Activated naive CD4-positive, alpha-beta T cell treated with anti-CD3 and anti-CD28 coated beads for 36 hours (primary cell): ENCODE measurements at regions of chrX and their contacts with region 1.

Region 1: GRCh38 chrX:41333744-41334259 is at the start of gene DDX3X:
- DNase-seq: peak; percentile 85
- H3K4me3 Mint-ChIP-seq: peak within 1 kb of the TSS; percentile 92
- H3K27ac Mint-ChIP-seq: peak within 1 kb of the TSS; percentile 99
- H3K4me1 Mint-ChIP-seq: peaks cover 22% of the 10 kb centered on the region
- H3K27me3 Mint-ChIP-seq: no peaks in the 10 kb centered on the region
- total RNA-seq, gene DDX3X: 163 to 171 TPM

Region 2: GRCh38 chrX:40580537-40581335 is 753.1 kb before region 1 on chrX and contains the start of gene ATP6AP2:
- CTCF ChIA-PET with region 1: no interaction called
- intact Hi-C with region 1: loop called (anchors 2 kb)
- DNase-seq: peak; percentile 95
- H3K4me3 Mint-ChIP-seq: peak within 1 kb of the TSS; percentile 83
- H3K27ac Mint-ChIP-seq: peak within 1 kb of the TSS; percentile 85
- H3K4me1 Mint-ChIP-seq: peaks cover 26% of the 10 kb centered on the region
- H3K27me3 Mint-ChIP-seq: no peaks in the 10 kb centered on the region
- total RNA-seq, gene ATP6AP2: 47.4 to 53.9 TPM

Region 3: GRCh38 chrX:40877887-40878286 is 455.9 kb before region 1 on chrX:
- CTCF ChIA-PET with region 1: no interaction called
- intact Hi-C with region 1: no loop called
- DNase-seq: no peak
- H3K4me3 Mint-ChIP-seq: no peak overlapping the region
- H3K27ac Mint-ChIP-seq: no peak overlapping the region
- H3K4me1 Mint-ChIP-seq: peaks cover 4% of the 10 kb centered on the region
- H3K27me3 Mint-ChIP-seq: no peaks in the 10 kb centered on the region

Region 4: DNA sequence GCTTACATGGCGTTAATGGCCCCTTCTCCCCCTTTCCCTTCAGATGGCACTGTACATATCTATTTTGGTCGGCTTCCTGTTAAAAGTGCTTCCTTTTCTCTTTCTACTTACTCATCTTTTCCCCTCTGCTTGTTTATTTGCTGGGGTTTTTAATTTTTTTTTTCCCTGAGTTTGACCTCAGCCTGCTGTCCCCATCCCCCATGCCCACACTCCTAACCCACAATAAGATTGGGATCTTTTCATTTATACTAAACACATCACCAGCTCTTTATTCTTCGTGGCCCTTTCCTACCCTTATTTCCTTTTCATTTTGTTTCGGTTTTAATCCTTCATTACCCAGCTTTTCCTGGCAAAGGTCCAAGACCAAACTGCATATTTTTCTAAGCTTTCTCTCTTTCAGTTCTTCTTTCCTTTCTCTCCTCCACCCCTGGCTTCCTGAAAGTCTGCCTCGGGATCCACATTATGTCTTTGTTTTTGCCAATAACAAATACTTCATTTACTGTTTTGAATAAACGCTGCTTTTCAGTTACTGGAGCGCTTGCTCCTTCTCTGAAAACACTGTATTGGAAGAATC is 400.6 kb before region 1 on chrX:
- CTCF ChIA-PET with region 1: no interaction called
- intact Hi-C with region 1: loop called (anchors 5 kb)
- DNase-seq: peak; percentile 26
- H3K4me3 Mint-ChIP-seq: peak overlapping the region; percentile 48
- H3K27ac Mint-ChIP-seq: peak overlapping the region; percentile 87
- H3K4me1 Mint-ChIP-seq: peaks cover 22% of the 10 kb centered on the region
- H3K27me3 Mint-ChIP-seq: no peaks in the 10 kb centered on the region

Region 5: DNA sequence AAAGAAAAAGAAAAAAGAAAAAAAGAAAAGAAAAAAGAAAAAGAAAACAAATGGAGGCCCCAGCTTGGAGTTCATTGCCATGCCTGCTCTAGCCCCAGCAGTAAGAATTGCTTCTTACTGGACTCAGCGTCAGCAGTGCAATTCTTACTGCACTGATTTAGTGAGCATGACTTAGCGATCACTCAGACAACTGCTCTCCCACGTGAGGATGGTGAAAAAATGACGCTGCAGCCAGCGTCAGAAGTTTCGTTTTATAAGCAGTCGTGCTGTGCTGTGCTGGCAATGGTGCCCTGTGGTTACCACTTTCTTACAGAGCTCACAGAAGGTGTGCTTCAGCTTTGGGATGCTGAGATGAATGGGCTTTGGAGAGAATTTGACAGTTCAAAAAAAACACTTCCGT is 68.2 kb before region 1 on chrX:
- CTCF ChIA-PET with region 1: no interaction called
- intact Hi-C with region 1: loop called (anchors 2 kb)
- DNase-seq: peak; percentile 82
- H3K4me3 Mint-ChIP-seq: no peak overlapping the region
- H3K27ac Mint-ChIP-seq: no peak overlapping the region
- H3K4me1 Mint-ChIP-seq: peaks cover 8% of the 10 kb centered on the region
- H3K27me3 Mint-ChIP-seq: no peaks in the 10 kb centered on the region

Region 6: GRCh38 chrX:41377624-41378023 is 43.8 kb after region 1 on chrX:
- CTCF ChIA-PET with region 1: interaction called, 10 read pairs
- intact Hi-C with region 1: no loop called
- DNase-seq: peak; percentile 72
- H3K4me3 Mint-ChIP-seq: no peak overlapping the region
- H3K27ac Mint-ChIP-seq: peak overlapping the region; percentile 68
- H3K4me1 Mint-ChIP-seq: peaks cover 14% of the 10 kb centered on the region
- H3K27me3 Mint-ChIP-seq: no peaks in the 10 kb centered on the region

Region 7: GRCh38 chrX:41412261-41413081 is 78.7 kb after region 1 on chrX:
- CTCF ChIA-PET with region 1: no interaction called
- intact Hi-C with region 1: no loop called
- DNase-seq: peak; percentile 28
- H3K4me3 Mint-ChIP-seq: no peak overlapping the region
- H3K27ac Mint-ChIP-seq: no peak overlapping the region
- H3K4me1 Mint-ChIP-seq: peaks cover 2% of the 10 kb centered on the region
- H3K27me3 Mint-ChIP-seq: no peaks in the 10 kb centered on the region

Region 8: GRCh38 chrX:41923257-41923969 is 589.6 kb after region 1 on chrX and contains the start of gene CASK:
- CTCF ChIA-PET with region 1: no interaction called
- intact Hi-C with region 1: loop called (anchors 2 kb)
- DNase-seq: peak; percentile 91
- H3K4me3 Mint-ChIP-seq: peak within 1 kb of the TSS; percentile 82
- H3K27ac Mint-ChIP-seq: peak within 1 kb of the TSS; percentile 73
- H3K4me1 Mint-ChIP-seq: peaks cover 24% of the 10 kb centered on the region
- H3K27me3 Mint-ChIP-seq: no peaks in the 10 kb centered on the region
- total RNA-seq, gene CASK: 15.4 to 18.9 TPM